ENCODE measurements at regions of chr10 and their contacts with region 1.

Region 1: DNA sequence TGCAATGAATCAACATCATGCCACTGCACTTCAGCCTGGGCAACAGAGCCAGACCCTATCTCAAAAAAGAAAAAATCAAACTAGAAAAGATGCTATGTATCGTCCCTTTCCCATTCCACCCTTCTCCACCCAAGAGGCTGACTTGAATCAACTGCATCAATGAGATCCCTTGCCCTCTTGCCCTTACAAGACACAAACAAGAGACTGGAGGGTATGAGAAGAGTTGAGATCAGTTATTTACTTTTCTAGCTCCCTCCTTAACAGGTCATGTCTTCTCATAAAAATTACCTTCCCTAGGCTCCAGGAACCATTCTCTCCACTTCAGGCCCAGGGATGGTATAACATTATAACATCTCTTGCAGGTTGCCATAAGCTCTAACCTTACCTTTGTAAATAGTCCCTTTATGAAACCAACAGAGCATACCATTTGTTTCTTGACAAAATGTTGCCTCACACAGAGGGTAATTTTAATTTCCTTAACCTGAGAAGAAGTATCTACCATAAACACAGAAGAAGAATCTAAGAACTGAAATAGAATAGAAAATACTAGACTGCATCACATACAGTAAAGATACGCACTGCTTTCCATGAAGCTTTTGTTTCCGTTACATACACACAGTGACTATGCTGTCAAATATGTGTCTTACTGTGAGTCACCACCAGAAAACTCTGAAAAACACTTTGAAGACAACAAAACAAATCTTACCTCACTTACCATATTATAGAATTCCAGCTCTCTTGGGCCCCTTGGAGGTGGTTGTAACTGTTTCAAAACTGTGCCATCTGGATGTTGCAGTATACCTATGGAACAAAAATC is 30.5 kb downstream of the IPMK start:
- DNase-seq: no peak
- ATAC-seq: no peak
- H3K4me3 ChIP-seq: no peak overlapping the region
- H3K4me3 Mint-ChIP-seq: no peak overlapping the region
- H3K27ac ChIP-seq: no peak overlapping the region
- H3K27ac Mint-ChIP-seq: no peak overlapping the region
- H3K4me1 ChIP-seq: peaks cover 15% of the 10 kb centered on the region
- H3K4me1 Mint-ChIP-seq: peaks cover 40% of the 10 kb centered on the region
- H3K27me3 ChIP-seq: no peaks in the 10 kb centered on the region
- H3K27me3 Mint-ChIP-seq: no peaks in the 10 kb centered on the region
- CTCF ChIP-seq: no peak

Region 2: GRCh38 chr10:58275908-58276307 is 38.7 kb after region 1 on chr10:
- CTCF ChIA-PET with region 1: no interaction called
- POLR2A ChIA-PET with region 1: no interaction called
- intact Hi-C with region 1: loop called in 1 of 2 experiments (anchors 5 kb)
- DNase-seq: no peak
- ATAC-seq: no peak
- H3K4me3 ChIP-seq: no peak overlapping the region
- H3K4me3 Mint-ChIP-seq: no peak overlapping the region
- H3K27ac ChIP-seq: no peak overlapping the region
- H3K27ac Mint-ChIP-seq: no peak overlapping the region
- H3K4me1 ChIP-seq: no peaks in the 10 kb centered on the region
- H3K4me1 Mint-ChIP-seq: peaks cover 3% of the 10 kb centered on the region
- H3K27me3 ChIP-seq: no peaks in the 10 kb centered on the region
- H3K27me3 Mint-ChIP-seq: no peaks in the 10 kb centered on the region
- CTCF ChIP-seq: no peak

Region 3: GRCh38 chr10:59167512-59167911 is 930.3 kb after region 1 on chr10:
- CTCF ChIA-PET with region 1: no interaction called
- POLR2A ChIA-PET with region 1: no interaction called
- intact Hi-C with region 1: no loop called
- DNase-seq: no peak
- ATAC-seq: no peak
- H3K4me3 ChIP-seq: no peak overlapping the region
- H3K4me3 Mint-ChIP-seq: no peak overlapping the region
- H3K27ac ChIP-seq: no peak overlapping the region
- H3K27ac Mint-ChIP-seq: no peak overlapping the region
- H3K4me1 ChIP-seq: no peaks in the 10 kb centered on the region
- H3K4me1 Mint-ChIP-seq: no peaks in the 10 kb centered on the region
- H3K27me3 ChIP-seq: no peaks in the 10 kb centered on the region
- H3K27me3 Mint-ChIP-seq: no peaks in the 10 kb centered on the region
- CTCF ChIP-seq: no peak

Measured in CD8-positive, alpha-beta T cell (primary cell).